ENCODE measurements at regions of chr6 and their contacts with region 1.

Region 1: GRCh38 chr6:38012573-38012972 is 193.0 kb downstream of the ZFAND3 start:
- DNase-seq: peak in 6 of 9 experiments; percentile 16 to 59 (median 32)
- ATAC-seq: peak; percentile 59
- H3K4me3 ChIP-seq: no peak overlapping the region
- H3K4me3 Mint-ChIP-seq: no peak overlapping the region
- H3K27ac ChIP-seq: no peak overlapping the region
- H3K27ac Mint-ChIP-seq: no peak overlapping the region
- H3K4me1 ChIP-seq: no peaks in the 10 kb centered on the region
- H3K4me1 Mint-ChIP-seq: peaks cover 36% of the 10 kb centered on the region
- H3K27me3 ChIP-seq: no peaks in the 10 kb centered on the region
- H3K27me3 Mint-ChIP-seq: no peaks in the 10 kb centered on the region
- CTCF ChIP-seq: peak; percentile 37

Region 2: GRCh38 chr6:37698261-37699137 is 314.1 kb before region 1 on chr6:
- CTCF ChIA-PET with region 1: no interaction called
- POLR2A ChIA-PET with region 1: no interaction called
- intact Hi-C with region 1: loop called in 1 of 2 experiments (anchors 5 kb)
- DNase-seq: peak; percentile 31 to 86 (median 67)
- ATAC-seq: peak; percentile 29
- H3K4me3 ChIP-seq: peak overlapping the region; percentile 80 to 84
- H3K4me3 Mint-ChIP-seq: peak overlapping the region; percentile 99
- H3K27ac ChIP-seq: peak overlapping the region in 1 of 2 experiments; percentile 85
- H3K27ac Mint-ChIP-seq: peak overlapping the region; percentile 97
- H3K4me1 ChIP-seq: peaks cover 11% of the 10 kb centered on the region
- H3K4me1 Mint-ChIP-seq: peaks cover 18% of the 10 kb centered on the region
- H3K27me3 ChIP-seq: peaks cover 9 to 25% of the 10 kb centered on the region in 2 experiments
- H3K27me3 Mint-ChIP-seq: peaks cover 31% of the 10 kb centered on the region
- CTCF ChIP-seq: no peak

Region 3: DNA sequence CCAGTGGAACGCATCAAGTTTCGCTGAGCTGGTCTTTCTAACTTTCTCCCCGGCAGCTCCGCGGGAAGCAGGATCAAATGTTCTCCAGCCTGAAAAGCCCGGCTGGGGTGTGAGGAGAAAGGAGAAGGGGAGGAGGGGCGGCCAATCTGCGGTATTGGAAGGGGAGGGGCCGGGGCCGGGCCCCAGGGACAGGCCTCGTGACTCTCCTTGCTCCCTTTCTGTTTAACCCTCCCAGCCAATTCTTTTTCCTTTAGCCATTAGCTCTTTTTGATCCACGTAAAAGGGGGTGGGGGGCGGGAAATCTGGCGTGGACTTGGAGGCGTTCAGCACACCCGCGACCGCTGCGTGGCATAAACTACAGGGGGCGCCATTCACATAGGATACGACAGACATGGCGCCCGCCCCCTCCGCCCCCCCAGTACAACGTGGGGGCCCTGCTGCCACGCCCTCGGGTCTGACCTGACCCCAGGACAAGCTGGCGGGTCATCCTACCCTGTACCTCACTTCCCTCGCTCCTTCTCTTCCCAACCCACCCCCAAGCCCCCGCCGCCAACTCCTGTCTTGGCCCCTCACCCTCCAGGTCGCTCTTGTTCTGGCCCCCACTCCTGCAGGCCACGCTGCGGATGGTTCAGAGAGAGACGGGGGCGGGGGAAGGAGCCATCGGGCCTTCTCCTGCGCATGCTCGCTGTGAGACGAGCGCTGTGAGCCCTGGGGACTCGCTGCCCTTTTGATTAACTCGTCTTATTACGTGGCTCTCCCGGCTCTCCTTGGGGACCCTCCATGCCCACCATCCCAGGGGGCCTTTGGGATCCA is 307.1 kb before region 1 on chr6:
- CTCF ChIA-PET with region 1: no interaction called
- POLR2A ChIA-PET with region 1: no interaction called
- intact Hi-C with region 1: loop called in 1 of 2 experiments (anchors 5 kb)
- DNase-seq: peak; percentile 47 to 89 (median 80)
- ATAC-seq: peak; percentile 95
- H3K4me3 ChIP-seq: peak overlapping the region; percentile 56 to 66
- H3K4me3 Mint-ChIP-seq: peak overlapping the region; percentile 84
- H3K27ac ChIP-seq: peak overlapping the region in 1 of 2 experiments; percentile 36
- H3K27ac Mint-ChIP-seq: peak overlapping the region; percentile 62
- H3K4me1 ChIP-seq: peaks cover 6% of the 10 kb centered on the region
- H3K4me1 Mint-ChIP-seq: peaks cover 15% of the 10 kb centered on the region
- H3K27me3 ChIP-seq: no peaks in the 10 kb centered on the region
- H3K27me3 Mint-ChIP-seq: no peaks in the 10 kb centered on the region
- CTCF ChIP-seq: peak; percentile 62

Region 4: GRCh38 chr6:37791156-37791919 is 221.2 kb before region 1 on chr6:
- CTCF ChIA-PET with region 1: interaction called, 3 read pairs
- POLR2A ChIA-PET with region 1: no interaction called
- intact Hi-C with region 1: loop called (anchors 1 to 2 kb)
- DNase-seq: peak; percentile 44 to 84 (median 80)
- ATAC-seq: peak; percentile 99
- H3K4me3 ChIP-seq: no peak overlapping the region
- H3K4me3 Mint-ChIP-seq: no peak overlapping the region
- H3K27ac ChIP-seq: no peak overlapping the region
- H3K27ac Mint-ChIP-seq: no peak overlapping the region
- H3K4me1 ChIP-seq: peaks cover 7% of the 10 kb centered on the region
- H3K4me1 Mint-ChIP-seq: peaks cover 3% of the 10 kb centered on the region
- H3K27me3 ChIP-seq: no peaks in the 10 kb centered on the region
- H3K27me3 Mint-ChIP-seq: no peaks in the 10 kb centered on the region
- CTCF ChIP-seq: peak; percentile 66

Region 5: GRCh38 chr6:38027685-38028373 is 15.3 kb after region 1 on chr6:
- CTCF ChIA-PET with region 1: no interaction called
- POLR2A ChIA-PET with region 1: no interaction called
- intact Hi-C with region 1: no loop called
- DNase-seq: no peak
- ATAC-seq: no peak
- H3K4me3 ChIP-seq: no peak overlapping the region
- H3K4me3 Mint-ChIP-seq: no peak overlapping the region
- H3K27ac ChIP-seq: no peak overlapping the region
- H3K27ac Mint-ChIP-seq: no peak overlapping the region
- H3K4me1 ChIP-seq: peaks cover under 1% of the 10 kb centered on the region
- H3K4me1 Mint-ChIP-seq: peaks cover 55% of the 10 kb centered on the region
- H3K27me3 ChIP-seq: no peaks in the 10 kb centered on the region
- H3K27me3 Mint-ChIP-seq: no peaks in the 10 kb centered on the region
- CTCF ChIP-seq: no peak

Region 6: DNA sequence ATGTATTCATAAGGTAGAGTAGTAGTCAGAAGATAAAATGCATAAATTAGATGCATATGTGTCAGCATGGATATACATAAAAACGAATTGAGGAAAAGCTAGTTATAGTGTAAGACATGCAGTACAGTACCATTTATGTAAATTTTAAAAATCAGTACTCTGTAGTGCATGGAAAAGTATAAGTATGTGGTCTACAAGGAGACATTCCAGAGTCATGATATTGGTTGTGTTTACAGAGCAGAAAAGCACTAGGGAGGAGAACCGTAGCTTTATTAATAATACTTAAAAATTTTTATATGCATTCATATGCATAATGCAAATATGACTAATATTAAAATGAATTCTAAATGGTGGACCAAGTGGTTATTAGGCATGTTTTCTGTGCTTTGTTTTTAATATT is 26.9 kb after region 1 on chr6:
- CTCF ChIA-PET with region 1: no interaction called
- POLR2A ChIA-PET with region 1: no interaction called
- intact Hi-C with region 1: no loop called
- DNase-seq: no peak
- ATAC-seq: no peak
- H3K4me3 ChIP-seq: no peak overlapping the region
- H3K4me3 Mint-ChIP-seq: no peak overlapping the region
- H3K27ac ChIP-seq: no peak overlapping the region
- H3K27ac Mint-ChIP-seq: no peak overlapping the region
- H3K4me1 ChIP-seq: peaks cover 6% of the 10 kb centered on the region
- H3K4me1 Mint-ChIP-seq: peaks cover 51% of the 10 kb centered on the region
- H3K27me3 ChIP-seq: no peaks in the 10 kb centered on the region
- H3K27me3 Mint-ChIP-seq: no peaks in the 10 kb centered on the region
- CTCF ChIP-seq: no peak

Region 7: GRCh38 chr6:38051819-38052434 is 39.4 kb after region 1 on chr6:
- CTCF ChIA-PET with region 1: no interaction called
- POLR2A ChIA-PET with region 1: no interaction called
- intact Hi-C with region 1: loop called in 1 of 2 experiments (anchors 1 kb)
- DNase-seq: no peak
- ATAC-seq: no peak
- H3K4me3 ChIP-seq: no peak overlapping the region
- H3K4me3 Mint-ChIP-seq: no peak overlapping the region
- H3K27ac ChIP-seq: no peak overlapping the region
- H3K27ac Mint-ChIP-seq: no peak overlapping the region
- H3K4me1 ChIP-seq: peaks cover under 1% of the 10 kb centered on the region
- H3K4me1 Mint-ChIP-seq: peaks cover 42% of the 10 kb centered on the region
- H3K27me3 ChIP-seq: no peaks in the 10 kb centered on the region
- H3K27me3 Mint-ChIP-seq: no peaks in the 10 kb centered on the region
- CTCF ChIP-seq: no peak